ENCODE measurements at regions of chr10 and their contacts with region 1.

Region 1: DNA sequence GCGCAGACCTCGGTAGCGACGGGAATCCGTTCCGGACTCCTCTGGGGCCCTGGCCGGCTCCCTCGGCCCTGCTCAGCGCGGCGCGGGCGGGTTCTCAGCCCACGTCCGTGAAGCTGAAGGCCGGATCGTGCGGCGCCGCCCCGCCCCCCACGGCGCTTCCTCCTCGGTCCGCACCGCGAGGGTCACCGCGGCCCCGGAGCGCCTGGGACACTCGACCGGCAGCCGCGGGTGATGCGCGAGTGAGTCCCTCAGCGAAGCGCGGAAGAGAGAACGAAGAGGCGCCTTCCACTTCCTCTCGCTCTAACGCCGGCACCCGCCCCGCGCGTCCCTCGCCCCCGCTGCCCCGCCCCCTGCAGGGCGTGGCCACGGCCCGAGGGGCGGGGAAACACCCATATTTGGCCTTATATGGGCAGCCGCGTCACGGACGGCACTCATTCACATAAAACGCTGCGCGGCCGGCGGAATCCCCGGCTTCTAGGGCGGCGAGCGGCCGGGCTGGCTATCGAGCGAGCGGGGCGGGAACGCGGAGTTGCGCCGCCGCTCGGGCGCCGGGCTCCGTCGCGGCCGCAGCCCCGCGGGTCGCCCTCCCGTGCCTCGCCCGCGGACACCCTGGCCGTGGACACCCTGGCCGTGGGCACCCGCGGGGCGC is at the start of gene DUSP5:
- DNase-seq: peak; percentile 97
- H3K4me3 Mint-ChIP-seq: peak within 1 kb of the TSS; percentile 99
- H3K27ac Mint-ChIP-seq: peak within 1 kb of the TSS; percentile 96
- H3K4me1 Mint-ChIP-seq: peaks cover 52% of the 10 kb centered on the region
- H3K27me3 Mint-ChIP-seq: no peaks in the 10 kb centered on the region
- total RNA-seq, gene DUSP5: 143 TPM

Region 2: DNA sequence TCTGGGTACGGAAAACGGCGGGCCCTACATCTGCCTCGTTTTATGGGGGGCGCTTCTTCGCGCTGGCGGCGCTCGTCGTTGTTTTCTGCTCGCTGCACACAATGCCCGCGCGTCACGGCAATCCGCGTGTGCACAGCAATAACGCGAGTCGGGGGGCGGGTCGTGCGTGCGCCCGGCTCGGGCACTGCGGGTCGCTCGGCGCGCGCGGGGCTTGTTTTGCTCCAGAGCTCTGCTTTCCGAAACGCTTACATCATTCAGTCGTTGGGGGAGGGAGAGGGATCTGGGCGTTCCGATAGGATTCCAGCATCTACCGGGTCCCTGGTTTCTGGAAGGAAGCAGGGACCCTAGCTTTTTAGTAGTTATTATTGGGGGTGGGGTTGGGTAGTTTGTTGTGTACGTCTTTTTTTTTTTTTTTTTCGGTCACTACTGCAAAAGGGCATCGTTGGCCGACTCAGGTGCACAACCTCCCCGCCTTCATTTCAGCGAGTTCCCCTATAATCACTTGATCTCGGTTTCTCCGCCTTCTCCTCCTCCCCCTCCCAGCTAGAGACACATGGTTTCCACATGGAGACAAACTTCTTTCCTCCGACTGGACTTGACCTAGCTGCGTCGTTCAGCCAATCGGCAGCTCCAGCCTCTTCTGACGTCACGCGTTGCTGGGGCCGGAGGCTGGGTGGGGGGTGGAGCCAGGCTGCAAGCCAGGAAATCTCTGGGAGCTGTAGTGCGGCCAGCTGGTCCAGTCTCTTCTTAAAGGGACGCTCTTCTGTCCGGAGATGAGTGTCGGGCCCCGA is 286.7 kb before region 1 on chr10:
- CTCF ChIA-PET with region 1: no interaction called
- POLR2A ChIA-PET with region 1: interaction called, 19 read pairs
- DNase-seq: peak; percentile 94
- H3K4me3 Mint-ChIP-seq: peak overlapping the region; percentile 87
- H3K27ac Mint-ChIP-seq: peak overlapping the region; percentile 95
- H3K4me1 Mint-ChIP-seq: peaks cover 57% of the 10 kb centered on the region
- H3K27me3 Mint-ChIP-seq: peaks cover 6% of the 10 kb centered on the region

Region 3: DNA sequence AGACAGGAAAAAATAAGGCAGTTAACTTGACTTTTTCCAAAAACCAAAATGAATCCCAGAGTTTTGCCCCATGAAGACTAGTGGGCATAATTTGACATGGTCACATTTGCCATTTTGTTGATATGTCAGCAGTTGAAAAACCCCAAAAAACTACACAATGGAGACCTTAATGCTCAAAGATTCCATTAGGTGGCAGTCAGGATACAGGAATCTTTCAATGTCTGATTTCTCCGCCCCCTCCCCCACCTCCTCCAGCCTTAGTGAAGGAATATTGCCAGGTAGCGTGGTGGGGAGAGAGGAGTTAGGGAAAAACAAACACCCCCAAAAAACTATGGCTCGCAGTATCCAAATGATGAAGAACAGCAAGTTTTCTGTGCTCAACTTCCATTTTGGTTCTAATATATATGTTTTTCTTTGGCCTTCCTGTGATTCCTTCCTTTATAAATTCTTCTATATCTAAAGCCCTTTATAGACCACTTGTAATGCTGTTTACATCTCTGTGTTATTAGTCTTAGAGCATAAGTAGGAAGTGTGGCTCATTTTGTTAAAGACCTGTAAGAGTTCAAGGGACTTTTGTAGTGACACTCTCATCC is 186.1 kb before region 1 on chr10:
- CTCF ChIA-PET with region 1: interaction called, 43 read pairs
- POLR2A ChIA-PET with region 1: interaction called, 49 read pairs
- DNase-seq: peak; percentile 50
- H3K4me3 Mint-ChIP-seq: no peak overlapping the region
- H3K27ac Mint-ChIP-seq: no peak overlapping the region
- H3K4me1 Mint-ChIP-seq: peaks cover 33% of the 10 kb centered on the region
- H3K27me3 Mint-ChIP-seq: peaks cover 3% of the 10 kb centered on the region

Region 4: DNA sequence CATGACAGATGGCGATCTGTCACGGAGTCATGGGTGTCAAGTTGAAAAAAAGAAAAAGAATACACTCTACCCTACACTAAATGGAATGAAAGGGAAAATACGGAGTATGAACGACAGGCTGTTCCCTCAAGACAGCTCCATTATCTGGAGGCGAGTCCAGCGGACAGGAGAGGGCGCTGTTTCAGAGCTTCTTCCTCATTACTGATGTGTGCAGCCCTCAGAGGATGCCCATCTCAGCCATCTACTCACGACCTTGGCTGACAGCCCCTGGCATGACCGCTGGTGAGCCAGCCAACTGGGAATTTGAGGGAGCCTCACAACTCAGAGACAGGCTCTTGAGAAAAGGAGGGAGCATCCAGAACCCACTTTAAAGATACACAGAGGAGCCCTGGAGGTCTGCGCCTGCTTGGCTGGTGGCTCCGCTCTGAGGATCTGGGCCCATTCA is 143.2 kb before region 1 on chr10:
- CTCF ChIA-PET with region 1: interaction called, 132 read pairs
- POLR2A ChIA-PET with region 1: interaction called, 431 read pairs
- DNase-seq: peak; percentile 89
- H3K4me3 Mint-ChIP-seq: peak overlapping the region; percentile 84
- H3K27ac Mint-ChIP-seq: peak overlapping the region; percentile 97
- H3K4me1 Mint-ChIP-seq: peaks cover 66% of the 10 kb centered on the region
- H3K27me3 Mint-ChIP-seq: peaks cover 3% of the 10 kb centered on the region

Region 5: GRCh38 chr10:110425684-110426293 is 71.8 kb before region 1 on chr10:
- CTCF ChIA-PET with region 1: interaction called, 6 read pairs
- POLR2A ChIA-PET with region 1: interaction called, 11 read pairs
- DNase-seq: peak; percentile 76
- H3K4me3 Mint-ChIP-seq: peak overlapping the region; percentile 8
- H3K27ac Mint-ChIP-seq: peak overlapping the region; percentile 74
- H3K4me1 Mint-ChIP-seq: peaks cover 84% of the 10 kb centered on the region
- H3K27me3 Mint-ChIP-seq: no peaks in the 10 kb centered on the region

Region 6: DNA sequence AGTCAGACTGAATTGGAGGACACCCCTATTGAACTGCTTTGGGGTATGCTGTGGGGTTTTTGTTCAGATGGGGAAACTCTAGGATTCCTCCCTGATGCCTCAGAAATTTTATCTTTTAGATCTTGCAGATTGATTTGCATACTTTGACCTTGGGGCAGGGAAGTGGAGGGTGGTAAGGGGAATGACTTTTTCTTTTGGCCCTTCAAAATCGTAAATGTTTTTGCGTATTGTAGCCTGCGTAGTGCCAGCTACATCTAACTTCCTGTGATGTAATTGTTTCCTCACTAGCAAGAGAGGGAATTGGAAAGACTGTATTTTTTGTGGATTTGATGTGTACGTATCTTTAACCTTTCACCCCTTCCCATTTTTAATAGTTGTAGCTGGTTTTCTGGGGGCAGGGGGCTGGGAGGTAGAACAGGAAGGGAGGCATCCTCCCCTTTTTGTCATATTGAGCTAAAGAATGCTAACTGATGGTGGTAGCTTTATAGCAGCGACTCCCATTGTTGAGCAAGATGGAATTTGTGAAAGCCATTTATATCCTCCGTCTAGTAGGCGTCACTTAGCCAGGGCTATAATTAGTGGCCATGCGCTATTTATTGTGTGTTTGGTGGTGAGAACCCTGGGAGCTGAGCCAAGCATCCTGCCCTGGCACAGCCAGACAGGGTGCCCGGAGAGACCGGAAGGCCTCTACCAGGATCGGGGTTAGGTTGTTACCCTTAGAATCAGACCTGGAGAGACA is 11.4 kb after region 1 on chr10:
- CTCF ChIA-PET with region 1: interaction called, 6 read pairs
- POLR2A ChIA-PET with region 1: interaction called, 13 read pairs
- DNase-seq: no peak
- H3K4me3 Mint-ChIP-seq: no peak overlapping the region
- H3K27ac Mint-ChIP-seq: no peak overlapping the region
- H3K4me1 Mint-ChIP-seq: peaks cover 89% of the 10 kb centered on the region
- H3K27me3 Mint-ChIP-seq: no peaks in the 10 kb centered on the region

Region 7: DNA sequence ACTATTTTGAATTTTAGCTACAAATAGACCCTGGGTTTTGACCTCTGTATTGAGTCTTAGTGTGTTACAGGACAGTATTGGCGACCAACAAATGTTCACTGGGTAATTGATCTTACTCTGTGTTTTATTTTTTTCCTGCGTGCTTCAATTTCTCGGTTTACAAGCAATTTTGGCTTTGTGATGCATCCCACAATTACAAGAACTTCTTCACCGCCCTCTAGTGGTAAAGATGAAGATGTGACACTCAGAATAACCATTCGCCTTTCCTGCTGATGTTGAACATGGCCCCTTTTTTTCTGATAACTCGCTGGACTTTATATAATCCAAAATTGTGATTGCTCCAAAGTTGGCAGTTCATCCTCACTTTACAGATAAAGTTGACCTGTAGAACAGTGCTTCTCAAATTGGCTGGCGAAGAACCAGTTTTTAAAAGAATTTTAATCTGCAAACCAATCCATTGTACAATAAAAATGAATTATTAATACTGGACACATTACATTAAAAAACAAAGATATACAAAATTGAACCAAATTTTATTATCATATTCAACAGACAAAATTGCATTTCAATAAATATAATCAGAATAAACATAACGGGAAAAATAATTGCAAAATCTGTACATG is 49.7 kb after region 1 on chr10:
- CTCF ChIA-PET with region 1: interaction called, 10 read pairs
- POLR2A ChIA-PET with region 1: interaction called, 26 read pairs
- DNase-seq: no peak
- H3K4me3 Mint-ChIP-seq: no peak overlapping the region
- H3K27ac Mint-ChIP-seq: no peak overlapping the region
- H3K4me1 Mint-ChIP-seq: peaks cover 10% of the 10 kb centered on the region
- H3K27me3 Mint-ChIP-seq: peaks cover 25% of the 10 kb centered on the region

Measured in activated CD4-positive, alpha-beta memory T cell treated with anti-CD3 and anti-CD28 coated beads, Interleukin-2, amount 10 ng/mL, durations not matched to agents 7 days and 5 days (primary cell).